Endothelial cell of umbilical vein (primary cell): ENCODE measurements at regions of chr11 and their contacts with region 1.

Region 1: DNA sequence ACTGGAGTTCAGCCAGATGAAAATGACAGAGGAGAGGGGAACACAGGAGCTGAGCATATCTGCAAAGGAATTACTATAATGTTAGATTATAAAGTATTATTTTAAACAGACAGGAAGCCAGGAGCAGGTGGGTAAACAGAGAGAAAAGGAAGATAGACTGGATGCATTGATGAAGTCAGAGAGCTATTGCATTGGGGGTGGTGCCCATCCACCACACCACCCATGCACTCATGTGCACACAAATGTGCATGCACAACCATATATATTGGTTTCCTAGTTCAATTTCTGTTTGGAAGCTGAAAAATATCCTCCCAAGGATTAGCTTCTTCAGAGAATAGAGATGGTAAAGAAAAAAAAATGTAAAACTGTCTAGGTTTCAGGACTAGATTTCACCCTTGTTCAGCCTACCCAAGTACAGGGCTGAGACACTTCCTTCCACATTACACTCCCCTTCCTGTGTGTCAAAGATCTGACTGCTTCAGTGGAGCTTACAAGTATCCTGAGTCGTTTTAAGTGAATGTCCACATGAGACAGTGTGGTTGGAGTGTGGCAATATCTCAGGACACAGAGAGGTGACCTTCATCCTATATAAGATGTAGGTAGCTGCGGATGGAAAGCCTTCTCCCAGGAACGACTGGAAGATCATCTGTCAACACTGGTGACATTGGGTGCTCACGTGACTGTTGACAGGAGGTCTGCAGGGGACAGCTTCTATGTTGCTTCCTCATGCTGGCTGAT is 12.2 kb upstream of the SMPD1 start:
- DNase-seq: peak; percentile 64
- H3K4me3 ChIP-seq: peak overlapping the region in 1 of 3 experiments; percentile 27
- H3K27ac ChIP-seq: peak overlapping the region; percentile 66
- H3K4me1 ChIP-seq: peaks cover 17% of the 10 kb centered on the region
- H3K27me3 ChIP-seq: no peaks in the 10 kb centered on the region
- CTCF ChIP-seq: no peak
- POLR2A ChIP-seq: peak; percentile 69

Region 2: DNA sequence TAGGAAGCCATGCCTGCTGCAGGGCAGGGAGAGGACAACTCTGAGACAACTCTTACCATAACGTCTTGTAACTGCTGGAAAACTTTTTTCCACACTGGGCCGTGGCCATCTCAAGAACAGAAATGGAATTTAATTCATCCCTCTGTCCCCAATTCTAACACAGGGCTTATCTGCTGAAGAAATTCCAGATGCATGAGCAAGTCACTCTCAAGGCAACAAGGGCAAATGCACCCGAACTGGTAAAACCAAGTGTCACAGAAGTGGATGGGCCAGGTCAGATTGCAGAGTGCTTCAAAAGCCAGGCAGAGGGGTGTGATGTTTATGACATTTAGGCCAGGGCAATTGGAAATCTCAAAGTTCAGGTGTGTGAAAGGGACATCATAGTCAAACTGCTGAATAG is 19.6 kb after region 1 on chr11:
- CTCF ChIA-PET with region 1: interaction called, 14 read pairs
- POLR2A ChIA-PET with region 1: no interaction called
- dilution Hi-C with region 1: no loop called
- intact Hi-C with region 1: no loop called
- DNase-seq: no peak
- H3K4me3 ChIP-seq: no peak overlapping the region
- H3K27ac ChIP-seq: no peak overlapping the region
- H3K4me1 ChIP-seq: no peaks in the 10 kb centered on the region
- H3K27me3 ChIP-seq: no peaks in the 10 kb centered on the region
- CTCF ChIP-seq: no peak
- POLR2A ChIP-seq: no peak

Region 3: GRCh38 chr11:6431861-6432260 is 53.8 kb after region 1 on chr11:
- CTCF ChIA-PET with region 1: interaction called, 17 read pairs
- POLR2A ChIA-PET with region 1: no interaction called
- dilution Hi-C with region 1: no loop called
- intact Hi-C with region 1: no loop called
- DNase-seq: no peak
- H3K4me3 ChIP-seq: no peak overlapping the region
- H3K27ac ChIP-seq: no peak overlapping the region
- H3K4me1 ChIP-seq: no peaks in the 10 kb centered on the region
- H3K27me3 ChIP-seq: no peaks in the 10 kb centered on the region
- CTCF ChIP-seq: no peak
- POLR2A ChIP-seq: no peak

Region 4: GRCh38 chr11:6473481-6474422 is 95.7 kb after region 1 on chr11 and contains the start of gene TRIM3:
- CTCF ChIA-PET with region 1: interaction called, 32 read pairs
- POLR2A ChIA-PET with region 1: no interaction called
- dilution Hi-C with region 1: no loop called
- intact Hi-C with region 1: no loop called
- DNase-seq: peak; percentile 87
- H3K4me3 ChIP-seq: peak within 1 kb of the TSS; percentile 61 to 87 (median 68)
- H3K27ac ChIP-seq: peak within 1 kb of the TSS; percentile 87
- H3K4me1 ChIP-seq: peaks cover 21% of the 10 kb centered on the region
- H3K27me3 ChIP-seq: no peaks in the 10 kb centered on the region
- CTCF ChIP-seq: peak in 1 of 2 donors; percentile 42
- POLR2A ChIP-seq: peak; percentile 95
- total RNA-seq, gene TRIM3: 25.6 and 29.2 TPM in 2 replicates

Region 5: DNA sequence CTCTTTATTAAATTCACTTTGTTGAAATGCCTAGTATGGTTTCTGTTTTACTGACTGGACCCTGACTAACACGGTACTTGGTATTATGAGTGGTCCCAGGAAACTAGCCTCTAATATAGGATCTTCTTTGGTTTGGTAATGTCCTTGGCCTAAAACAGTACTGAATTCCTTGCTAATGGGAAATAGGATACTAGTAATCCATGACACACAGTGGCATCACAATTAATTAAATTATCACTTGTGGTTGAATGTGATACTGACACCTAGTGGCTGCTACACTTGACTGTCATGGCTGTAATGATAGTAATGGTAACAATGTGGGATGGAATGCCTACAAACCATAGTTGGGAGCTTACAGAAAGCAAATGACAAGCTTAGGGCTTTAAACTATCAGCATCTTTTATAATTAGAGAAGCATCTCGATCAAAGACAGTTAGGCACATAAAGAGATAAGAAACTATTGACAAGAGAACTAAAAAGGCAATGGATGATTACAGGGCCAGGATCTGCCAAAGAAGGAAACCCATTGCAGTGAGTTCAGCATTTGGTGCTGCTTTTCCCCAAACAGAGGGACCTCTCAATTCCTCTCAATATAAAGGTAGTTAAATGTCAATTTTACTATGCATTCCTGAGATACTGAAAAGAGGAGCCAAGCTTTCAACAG is 127.6 kb after region 1 on chr11:
- CTCF ChIA-PET with region 1: interaction called, 180 read pairs
- POLR2A ChIA-PET with region 1: no interaction called
- dilution Hi-C with region 1: no loop called
- intact Hi-C with region 1: loop called (anchors 1 kb)
- DNase-seq: peak; percentile 67
- H3K4me3 ChIP-seq: no peak overlapping the region
- H3K27ac ChIP-seq: no peak overlapping the region
- H3K4me1 ChIP-seq: no peaks in the 10 kb centered on the region
- H3K27me3 ChIP-seq: no peaks in the 10 kb centered on the region
- CTCF ChIP-seq: peak; percentile 58 to 66
- POLR2A ChIP-seq: no peak

Region 6: DNA sequence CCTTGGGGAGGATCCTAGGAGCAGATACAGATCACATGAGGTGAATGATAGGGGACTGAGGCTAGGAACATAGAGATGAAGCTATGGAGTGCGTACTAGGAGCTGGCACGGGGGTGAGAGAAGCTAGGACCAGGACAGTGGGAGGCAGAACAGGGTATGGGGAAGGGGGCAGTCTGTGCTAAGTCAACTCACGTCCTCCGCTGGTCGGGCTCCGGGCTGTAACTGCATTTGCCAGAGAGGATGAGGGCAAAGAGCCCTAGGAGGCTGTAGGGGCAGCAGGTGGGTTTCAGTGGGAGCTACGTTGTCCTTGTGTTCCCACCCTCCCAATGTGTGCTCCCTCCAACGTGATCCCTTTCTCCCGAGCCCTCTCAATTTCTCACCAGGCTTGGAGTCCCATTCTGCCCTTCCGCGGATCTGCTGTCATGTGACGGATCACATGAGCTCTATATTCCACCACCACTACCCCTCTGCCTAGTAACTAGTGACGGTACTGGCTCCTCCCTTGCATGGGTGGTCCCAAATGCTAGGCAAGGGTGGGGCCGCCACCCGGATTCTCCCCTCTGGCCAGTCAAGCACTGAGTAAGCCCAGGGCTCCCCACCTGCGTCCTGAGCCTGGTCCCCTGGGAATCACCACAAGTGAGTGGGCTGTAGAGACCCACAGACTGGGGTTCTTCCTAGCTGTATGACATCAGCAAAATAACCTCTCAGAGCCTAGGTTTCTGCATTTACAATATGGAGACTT is 241.1 kb after region 1 on chr11 and contains the start of gene TPP1:
- CTCF ChIA-PET with region 1: interaction called, 22 read pairs
- POLR2A ChIA-PET with region 1: no interaction called
- dilution Hi-C with region 1: no loop called
- intact Hi-C with region 1: no loop called
- DNase-seq: peak; percentile 97
- H3K4me3 ChIP-seq: peak within 1 kb of the TSS; percentile 26 to 88 (median 87)
- H3K27ac ChIP-seq: peak within 1 kb of the TSS; percentile 68
- H3K4me1 ChIP-seq: peaks cover 33% of the 10 kb centered on the region
- H3K27me3 ChIP-seq: no peaks in the 10 kb centered on the region
- CTCF ChIP-seq: no peak
- POLR2A ChIP-seq: peak; percentile 92
- total RNA-seq, gene TPP1: 101 and 124 TPM in 2 replicates

Region 7: GRCh38 chr11:6757373-6757967 is 379.4 kb after region 1 on chr11:
- CTCF ChIA-PET with region 1: interaction called, 68 read pairs
- POLR2A ChIA-PET with region 1: no interaction called
- dilution Hi-C with region 1: no loop called
- intact Hi-C with region 1: loop called (anchors 1 kb)
- DNase-seq: peak; percentile 73
- H3K4me3 ChIP-seq: no peak overlapping the region
- H3K27ac ChIP-seq: no peak overlapping the region
- H3K4me1 ChIP-seq: no peaks in the 10 kb centered on the region
- H3K27me3 ChIP-seq: peaks cover 2 to 8% of the 10 kb centered on the region in 2 experiments
- CTCF ChIP-seq: peak; percentile 58 to 62
- POLR2A ChIP-seq: no peak